Activated naive CD4-positive, alpha-beta T cell treated with anti-CD3 and anti-CD28 coated beads for 36 hours (primary cell): ENCODE measurements at regions of chr3 and their contacts with region 1.

Region 1: DNA sequence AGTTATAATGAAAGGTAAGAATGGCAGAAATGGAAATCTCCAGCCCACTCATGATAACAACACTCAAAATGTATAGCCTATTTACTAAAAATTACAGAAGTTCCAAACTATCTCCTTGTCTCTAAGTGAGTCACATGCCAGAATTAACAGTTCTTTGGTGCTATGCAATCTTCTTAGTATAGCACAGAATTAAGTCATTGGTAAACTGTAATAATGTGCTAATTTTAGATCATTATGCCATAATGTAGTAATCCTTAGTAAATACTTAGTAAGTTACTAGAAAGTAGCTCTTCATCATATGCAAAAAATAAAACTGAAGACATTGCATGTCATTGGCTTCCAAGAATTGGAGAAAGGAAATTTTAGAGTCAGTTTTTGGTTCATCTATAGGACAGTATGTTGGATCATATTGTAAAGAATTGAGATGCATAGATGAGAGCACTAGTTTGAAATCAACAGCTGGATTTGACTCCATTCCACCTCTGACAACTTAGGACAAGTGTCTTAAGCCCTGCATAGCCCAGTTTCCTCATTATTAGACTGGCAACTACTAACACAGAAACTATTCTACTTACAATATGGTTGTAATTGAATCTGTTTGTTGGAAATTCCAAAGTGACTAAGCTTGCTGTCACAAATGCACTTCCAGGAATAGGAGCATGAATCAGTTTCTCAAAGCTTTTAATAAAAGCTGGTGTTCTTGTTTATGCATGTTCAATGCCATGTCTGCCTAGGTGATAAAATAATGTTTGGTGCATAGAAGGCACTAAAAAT is 40.1 kb upstream of the CD47 start:
- DNase-seq: no peak
- H3K4me3 Mint-ChIP-seq: peak overlapping the region; percentile 16
- H3K27ac Mint-ChIP-seq: peak overlapping the region; percentile 76
- H3K4me1 Mint-ChIP-seq: peaks cover 85% of the 10 kb centered on the region
- H3K27me3 Mint-ChIP-seq: no peaks in the 10 kb centered on the region

Region 2: GRCh38 chr3:107604057-107604822 is 526.6 kb before region 1 on chr3:
- CTCF ChIA-PET with region 1: no interaction called
- intact Hi-C with region 1: loop called (anchors 5 kb)
- DNase-seq: peak; percentile 11
- H3K4me3 Mint-ChIP-seq: no peak overlapping the region
- H3K27ac Mint-ChIP-seq: no peak overlapping the region
- H3K4me1 Mint-ChIP-seq: peaks cover 36% of the 10 kb centered on the region
- H3K27me3 Mint-ChIP-seq: no peaks in the 10 kb centered on the region

Region 3: GRCh38 chr3:107845380-107846278 is 285.3 kb before region 1 on chr3:
- CTCF ChIA-PET with region 1: no interaction called
- intact Hi-C with region 1: no loop called
- DNase-seq: no peak
- H3K4me3 Mint-ChIP-seq: no peak overlapping the region
- H3K27ac Mint-ChIP-seq: no peak overlapping the region
- H3K4me1 Mint-ChIP-seq: no peaks in the 10 kb centered on the region
- H3K27me3 Mint-ChIP-seq: no peaks in the 10 kb centered on the region

Region 4: DNA sequence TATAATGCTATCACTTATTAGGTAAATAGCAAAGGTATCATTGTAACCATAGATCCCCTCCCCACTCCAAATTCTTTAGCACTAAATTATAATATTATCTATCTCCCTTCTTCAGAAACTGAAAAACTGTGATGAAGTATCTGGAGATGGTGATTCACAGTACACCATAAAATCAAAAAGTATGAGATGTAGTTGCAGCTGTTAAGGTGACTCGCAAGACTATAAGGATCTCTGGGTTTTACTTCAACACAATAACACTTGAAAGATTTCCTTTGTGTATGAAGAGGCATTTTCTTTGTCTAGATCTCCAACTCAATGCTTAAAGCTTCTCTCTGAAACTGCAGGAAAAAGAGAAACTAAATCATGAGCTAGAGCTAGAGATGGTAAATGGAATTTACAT is 44.5 kb after region 1 on chr3:
- CTCF ChIA-PET with region 1: no interaction called
- intact Hi-C with region 1: loop called (anchors 2 kb)
- DNase-seq: no peak
- H3K4me3 Mint-ChIP-seq: no peak overlapping the region
- H3K27ac Mint-ChIP-seq: peak overlapping the region; percentile 25
- H3K4me1 Mint-ChIP-seq: peaks cover 31% of the 10 kb centered on the region
- H3K27me3 Mint-ChIP-seq: no peaks in the 10 kb centered on the region

Region 5: GRCh38 chr3:108415661-108416060 is 284.8 kb after region 1 on chr3:
- CTCF ChIA-PET with region 1: no interaction called
- intact Hi-C with region 1: loop called (anchors 1 kb)
- DNase-seq: no peak
- H3K4me3 Mint-ChIP-seq: no peak overlapping the region
- H3K27ac Mint-ChIP-seq: no peak overlapping the region
- H3K4me1 Mint-ChIP-seq: peaks cover 18% of the 10 kb centered on the region
- H3K27me3 Mint-ChIP-seq: peaks cover 12% of the 10 kb centered on the region